Aorta (tissue), 5 donors: ENCODE measurements at regions of chr5 and their contacts with region 1.

Region 1: DNA sequence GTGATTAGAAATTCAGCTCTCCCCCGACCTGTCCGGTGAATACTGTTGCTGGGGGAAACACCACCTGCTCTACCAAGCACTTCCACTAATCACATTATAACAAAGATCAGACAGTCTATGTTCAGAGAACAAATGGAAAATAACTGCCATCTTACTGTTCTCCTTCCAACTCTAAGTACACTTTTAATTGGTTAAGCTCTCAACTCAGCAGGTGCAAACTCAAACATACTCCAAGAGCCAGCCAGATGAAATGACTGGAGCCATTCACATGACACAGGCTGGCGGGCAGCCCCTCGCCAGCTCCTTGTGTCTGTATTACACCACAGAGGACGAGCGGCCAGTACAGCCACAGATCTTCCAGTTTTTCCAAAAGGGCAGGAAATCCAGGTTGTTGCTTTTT is 16.1 kb downstream of the LIFR start:
- DNase-seq: peak; percentile 55 to 73
- ATAC-seq: peak; percentile 64
- H3K4me3 ChIP-seq: no peak overlapping the region
- H3K27ac ChIP-seq: peak overlapping the region in 1 of 2 donors; percentile 4
- H3K4me1 ChIP-seq: peaks cover 4 to 6% of the 10 kb centered on the region in 2 donors
- H3K27me3 ChIP-seq: no peaks in the 10 kb centered on the region

Region 2: DNA sequence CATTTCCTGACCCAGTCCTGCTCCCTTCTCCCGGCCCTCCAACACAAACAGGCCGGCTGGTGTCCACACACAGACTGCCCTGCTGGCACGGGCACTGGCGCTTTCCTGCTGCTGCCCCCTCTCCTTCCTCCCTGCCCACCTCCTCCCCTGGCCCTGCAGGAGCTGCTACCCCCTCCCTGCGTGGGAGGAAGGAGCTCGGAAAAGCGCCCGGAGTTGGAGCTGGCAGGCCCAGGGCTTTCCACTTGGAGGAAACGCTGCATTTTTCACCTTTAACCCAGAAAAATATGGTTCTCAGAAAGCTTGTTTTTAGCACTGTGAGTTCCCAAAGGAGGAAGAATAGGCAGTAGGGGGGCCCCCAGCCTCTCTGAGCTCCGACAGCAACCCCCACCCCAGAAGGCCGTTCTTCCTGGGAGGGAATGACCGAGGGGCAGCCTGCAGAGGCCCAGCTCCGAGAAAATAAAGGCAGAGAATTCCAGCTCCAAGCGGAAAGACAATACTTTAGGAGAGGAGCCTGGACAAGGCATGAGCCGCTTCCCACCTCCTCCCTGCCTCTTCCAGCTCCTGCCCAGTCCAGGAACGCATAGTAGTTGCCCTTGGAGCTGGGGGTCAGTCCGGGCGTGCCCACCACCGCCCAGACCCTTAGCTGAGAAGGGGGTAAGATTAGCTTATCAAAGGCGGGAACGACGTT is 72.8 kb before region 1 on chr5:
- intact Hi-C with region 1: loop called (anchors 5 to 10 kb)
- DNase-seq: peak; percentile 91 to 92
- ATAC-seq: peak; percentile 76
- H3K4me3 ChIP-seq: no peak overlapping the region
- H3K27ac ChIP-seq: peak overlapping the region; percentile 79 to 95
- H3K4me1 ChIP-seq: peaks cover 1 to 4% of the 10 kb centered on the region in 2 donors
- H3K27me3 ChIP-seq: no peaks in the 10 kb centered on the region

Region 3: GRCh38 chr5:38473008-38473407 is 67.3 kb before region 1 on chr5:
- intact Hi-C with region 1: loop called (anchors 5 to 10 kb)
- DNase-seq: no peak
- ATAC-seq: no peak
- H3K4me3 ChIP-seq: no peak overlapping the region
- H3K27ac ChIP-seq: no peak overlapping the region
- H3K4me1 ChIP-seq: peaks cover 0 to 4% of the 10 kb centered on the region in 2 donors
- H3K27me3 ChIP-seq: no peaks in the 10 kb centered on the region

Region 4: DNA sequence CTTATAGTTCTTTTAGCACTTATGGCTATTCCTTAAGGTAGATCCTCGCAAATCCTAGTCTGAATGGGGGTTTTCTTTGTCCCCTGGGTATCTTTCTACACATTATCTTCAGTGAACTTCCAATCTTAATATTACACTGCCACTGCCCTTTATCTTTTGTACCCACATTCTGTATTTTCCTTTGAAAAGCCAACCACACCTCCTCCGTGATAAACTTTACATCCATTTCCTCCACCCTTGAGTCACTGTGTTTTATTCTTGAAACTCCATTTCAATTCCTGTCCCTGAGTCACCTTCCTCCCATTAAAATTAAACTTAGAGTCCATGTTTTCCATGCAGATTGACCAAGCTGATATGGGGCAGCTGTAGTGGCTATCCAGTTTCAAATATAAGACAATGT is 577.1 kb after region 1 on chr5:
- intact Hi-C with region 1: no loop called
- DNase-seq: no peak
- ATAC-seq: no peak
- H3K4me3 ChIP-seq: no peak overlapping the region
- H3K27ac ChIP-seq: no peak overlapping the region
- H3K4me1 ChIP-seq: no peaks in the 10 kb centered on the region
- H3K27me3 ChIP-seq: no peaks in the 10 kb centered on the region